Calu3 (cell line): ENCODE measurements at regions of chr2 and their contacts with region 1.

Region 1: DNA sequence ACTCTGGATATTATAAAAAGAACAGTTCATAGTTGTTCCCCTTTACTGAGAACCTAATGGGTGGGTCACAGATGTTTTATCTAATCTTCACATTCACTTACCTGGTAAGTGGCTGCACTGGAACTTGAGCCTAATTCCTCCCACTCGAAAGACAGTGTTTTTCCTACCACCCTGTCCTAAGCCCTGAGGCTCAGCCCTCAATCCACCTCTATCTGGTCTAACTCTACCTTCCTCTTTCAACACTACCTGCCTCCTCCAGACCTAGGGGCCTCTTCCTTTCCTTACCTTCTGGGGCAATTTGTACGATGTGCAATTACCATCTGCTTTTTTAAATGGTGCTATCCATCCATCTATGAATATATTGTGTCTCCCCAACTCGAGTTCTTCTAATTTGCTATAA is 9.7 kb upstream of the KIF3C start:
- DNase-seq: no peak
- H3K4me3 Mint-ChIP-seq: peak overlapping the region; percentile 8
- H3K27ac Mint-ChIP-seq: no peak overlapping the region
- H3K4me1 Mint-ChIP-seq: peaks cover 25% of the 10 kb centered on the region
- H3K27me3 Mint-ChIP-seq: no peaks in the 10 kb centered on the region
- CTCF ChIP-seq: no peak

Region 2: DNA sequence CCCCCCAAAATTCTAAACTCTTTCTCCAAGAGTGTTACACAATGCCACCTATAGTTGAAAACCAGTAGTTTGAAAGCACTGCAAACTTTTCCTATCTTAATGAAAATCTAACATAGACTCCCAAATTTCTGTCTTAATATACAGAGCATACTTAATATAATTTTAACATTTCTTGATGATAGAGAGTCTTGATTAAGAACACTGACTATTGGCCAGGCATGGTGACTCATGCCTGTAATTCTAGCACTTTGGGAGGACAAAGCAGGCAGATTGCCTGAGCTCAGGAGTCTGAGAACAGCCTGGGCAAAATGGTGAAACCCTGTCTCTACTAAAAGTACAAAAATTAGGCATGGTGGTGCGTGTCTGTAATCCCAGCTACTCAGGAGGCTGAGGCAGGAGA is 147.9 kb before region 1 on chr2:
- CTCF ChIA-PET with region 1: no interaction called
- intact Hi-C with region 1: no loop called
- DNase-seq: no peak
- H3K4me3 Mint-ChIP-seq: no peak overlapping the region
- H3K27ac Mint-ChIP-seq: no peak overlapping the region
- H3K4me1 Mint-ChIP-seq: no peaks in the 10 kb centered on the region
- H3K27me3 Mint-ChIP-seq: no peaks in the 10 kb centered on the region
- CTCF ChIP-seq: no peak

Region 3: GRCh38 chr2:25960920-25961319 is 31.0 kb before region 1 on chr2:
- CTCF ChIA-PET with region 1: no interaction called
- intact Hi-C with region 1: no loop called
- DNase-seq: no peak
- H3K4me3 Mint-ChIP-seq: no peak overlapping the region
- H3K27ac Mint-ChIP-seq: no peak overlapping the region
- H3K4me1 Mint-ChIP-seq: no peaks in the 10 kb centered on the region
- H3K27me3 Mint-ChIP-seq: no peaks in the 10 kb centered on the region
- CTCF ChIP-seq: no peak

Region 4: GRCh38 chr2:26011990-26012856 is 20.3 kb after region 1 on chr2:
- CTCF ChIA-PET with region 1: interaction called, 13 read pairs
- intact Hi-C with region 1: no loop called
- DNase-seq: peak; percentile 82
- H3K4me3 Mint-ChIP-seq: peak overlapping the region; percentile 57
- H3K27ac Mint-ChIP-seq: peak overlapping the region; percentile 91
- H3K4me1 Mint-ChIP-seq: peaks cover 54% of the 10 kb centered on the region
- H3K27me3 Mint-ChIP-seq: no peaks in the 10 kb centered on the region
- CTCF ChIP-seq: no peak

Region 5: DNA sequence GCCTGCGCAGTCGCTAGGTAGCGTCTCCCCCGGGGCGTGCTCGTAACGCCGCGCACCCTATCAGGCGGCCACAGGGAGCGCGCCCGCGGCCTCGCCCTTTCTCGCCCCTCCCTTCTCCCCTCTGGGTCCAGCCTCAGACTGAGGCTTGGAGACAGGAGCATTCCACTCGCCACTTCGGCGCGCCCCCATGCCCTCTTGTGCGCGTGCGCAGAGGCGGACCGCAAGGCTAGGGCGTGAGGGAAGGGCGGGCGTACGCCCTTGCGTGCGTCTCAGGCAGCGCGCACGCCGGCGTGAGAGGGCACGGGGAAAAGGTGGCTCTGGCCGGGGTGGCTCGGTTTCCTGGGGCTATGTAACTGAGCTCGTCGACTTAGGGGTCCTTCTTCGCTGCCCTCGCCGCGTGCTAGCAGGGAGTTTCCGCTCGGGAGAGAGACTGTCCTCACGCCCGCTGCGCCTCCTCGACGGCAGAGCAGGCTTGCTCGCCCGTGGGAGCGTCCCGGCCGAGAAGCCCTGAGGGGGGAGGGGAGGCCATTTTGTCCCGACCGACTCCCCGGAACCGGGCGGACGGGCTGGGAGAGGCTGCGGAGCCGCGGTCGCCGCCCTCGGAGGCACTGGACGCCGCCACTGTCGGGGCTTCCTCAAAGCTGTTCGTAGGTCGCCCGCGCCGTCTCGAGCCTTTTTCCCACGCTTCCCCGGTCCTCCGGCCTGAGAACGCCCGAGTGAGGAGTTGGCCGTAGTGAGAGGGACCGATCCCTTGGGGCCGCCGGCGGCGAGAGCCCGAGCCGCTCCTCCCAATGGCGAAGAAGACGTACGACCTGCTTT is 42.1 kb after region 1 on chr2 and contains the start of gene RAB10:
- CTCF ChIA-PET with region 1: interaction called, 18 read pairs
- intact Hi-C with region 1: loop called (anchors 5 kb)
- DNase-seq: peak; percentile 99
- H3K4me3 Mint-ChIP-seq: peak within 1 kb of the TSS; percentile 77
- H3K27ac Mint-ChIP-seq: peak within 1 kb of the TSS; percentile 68
- H3K4me1 Mint-ChIP-seq: peaks cover 13% of the 10 kb centered on the region
- H3K27me3 Mint-ChIP-seq: no peaks in the 10 kb centered on the region
- CTCF ChIP-seq: no peak
- total RNA-seq, gene RAB10: 149 and 157 TPM in 2 replicates

Region 6: DNA sequence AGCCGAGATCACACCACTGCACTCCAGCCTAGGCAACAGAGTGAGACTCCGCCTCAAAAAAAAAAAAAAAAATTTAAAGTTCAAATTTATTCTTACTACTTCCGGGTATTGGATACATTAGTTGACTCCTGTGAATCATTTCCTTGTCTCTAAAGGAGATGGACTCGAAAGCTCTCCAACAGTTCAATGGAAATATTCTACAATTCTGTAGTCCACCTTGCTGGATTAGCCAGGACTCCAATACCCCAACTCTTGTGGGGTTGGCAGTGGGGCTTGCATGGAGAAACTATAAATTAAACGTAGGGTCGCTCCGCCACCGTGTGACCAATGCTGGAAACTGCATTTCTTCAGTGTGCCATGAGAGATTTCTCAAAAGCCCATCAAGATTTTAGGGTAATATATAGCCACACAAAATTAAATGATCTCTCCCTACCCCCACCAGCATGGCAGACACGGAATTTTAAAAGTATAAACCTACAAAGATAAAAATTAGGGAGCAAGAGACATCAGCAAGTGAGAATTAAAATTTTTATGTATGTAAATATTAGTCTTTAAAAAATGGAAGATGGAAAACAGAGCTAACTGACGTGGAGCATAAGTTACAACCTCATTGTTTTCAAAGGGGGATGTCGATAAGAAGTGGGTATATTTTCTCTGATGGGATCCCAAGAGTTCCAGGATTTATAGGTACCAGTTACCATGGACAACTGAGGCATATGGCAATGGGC is 153.2 kb after region 1 on chr2:
- CTCF ChIA-PET with region 1: interaction called, 12 read pairs
- intact Hi-C with region 1: loop called (anchors 1 kb)
- DNase-seq: peak; percentile 64
- H3K4me3 Mint-ChIP-seq: no peak overlapping the region
- H3K27ac Mint-ChIP-seq: peak overlapping the region; percentile 2
- H3K4me1 Mint-ChIP-seq: peaks cover 25% of the 10 kb centered on the region
- H3K27me3 Mint-ChIP-seq: peaks cover 22% of the 10 kb centered on the region
- CTCF ChIP-seq: peak; percentile 74

Region 7: DNA sequence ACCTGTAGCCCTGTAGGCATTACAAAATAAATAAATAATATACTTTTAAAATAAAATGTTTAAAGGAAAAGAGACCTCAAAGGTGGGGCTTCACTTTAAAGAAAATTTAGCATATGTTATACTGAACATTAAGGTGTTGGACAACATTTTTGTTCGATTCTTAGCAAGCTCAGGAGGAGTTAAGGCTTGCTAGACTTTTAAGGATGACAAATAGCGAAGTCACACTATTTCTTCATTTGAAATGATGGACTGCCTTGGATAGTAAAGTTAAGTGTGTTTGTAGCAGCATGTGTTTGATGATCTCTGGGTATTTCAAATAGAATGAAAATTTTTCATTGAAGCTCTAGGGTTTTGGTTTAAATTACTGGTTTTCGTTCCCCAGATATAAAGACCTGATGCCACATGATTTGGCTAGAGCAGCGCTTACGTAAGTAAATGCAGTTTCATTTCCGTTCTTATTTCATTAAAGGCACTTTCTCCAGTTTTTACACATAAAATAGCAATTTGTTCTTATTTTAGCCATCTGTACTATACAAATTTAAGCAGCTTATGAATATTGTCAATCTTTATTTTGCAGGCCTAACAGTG is 277.7 kb after region 1 on chr2:
- CTCF ChIA-PET with region 1: no interaction called
- intact Hi-C with region 1: no loop called
- DNase-seq: no peak
- H3K4me3 Mint-ChIP-seq: no peak overlapping the region
- H3K27ac Mint-ChIP-seq: no peak overlapping the region
- H3K4me1 Mint-ChIP-seq: peaks cover 19% of the 10 kb centered on the region
- H3K27me3 Mint-ChIP-seq: no peaks in the 10 kb centered on the region
- CTCF ChIP-seq: no peak